ENCODE measurements at regions of chr18 and their contacts with region 1.

Region 1: DNA sequence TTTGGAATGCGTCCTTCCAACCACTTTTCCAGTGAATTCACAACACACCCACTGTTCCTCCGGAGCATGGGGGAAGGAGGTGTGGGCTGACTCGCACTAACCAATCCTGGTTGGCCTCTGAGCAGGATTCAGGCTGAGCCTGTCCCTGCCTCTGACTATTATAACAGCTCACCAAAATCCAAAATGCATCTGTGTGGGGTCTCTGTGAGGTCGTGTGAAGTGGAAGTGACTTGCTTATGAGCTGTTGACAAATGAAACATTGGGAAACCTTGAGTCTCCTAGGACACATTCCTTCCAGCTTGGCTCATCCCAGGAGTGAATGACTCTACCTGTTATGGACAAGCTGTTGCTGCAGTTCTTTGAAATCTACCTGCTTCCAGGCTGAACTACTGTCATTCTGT is 1.5 kb downstream of the CIDEA start:
- DNase-seq: peak; percentile 58 to 97
- H3K4me3 ChIP-seq: no peak overlapping the region; the same call in 1 of the 2 replicates
- H3K27ac ChIP-seq: peak overlapping the region; percentile 97
- H3K4me1 ChIP-seq: peaks cover 47% of the 10 kb centered on the region
- H3K27me3 ChIP-seq: no peaks in the 10 kb centered on the region
- CTCF ChIP-seq: no peak

Region 2: GRCh38 chr18:12086237-12086637 is 169.4 kb before region 1 on chr18:
- CTCF ChIA-PET with region 1: no interaction called
- POLR2A ChIA-PET with region 1: no interaction called
- intact Hi-C with region 1: loop called (anchors 5 kb)
- DNase-seq: peak; percentile 36 to 93
- H3K4me3 ChIP-seq: no peak overlapping the region
- H3K27ac ChIP-seq: no peak overlapping the region
- H3K4me1 ChIP-seq: no peaks in the 10 kb centered on the region
- H3K27me3 ChIP-seq: no peaks in the 10 kb centered on the region
- CTCF ChIP-seq: no peak